ENCODE measurements at regions of chr12 and their contacts with region 1.

Region 1: GRCh38 chr12:104671407-104672098 is 214.8 kb downstream of the CHST11 start:
- DNase-seq: peak; percentile 94
- H3K4me3 Mint-ChIP-seq: peak overlapping the region; percentile 52
- H3K27ac Mint-ChIP-seq: peak overlapping the region; percentile 95
- H3K4me1 Mint-ChIP-seq: peaks cover 60% of the 10 kb centered on the region
- H3K27me3 Mint-ChIP-seq: no peaks in the 10 kb centered on the region

Region 2: GRCh38 chr12:104462931-104463339 is 208.6 kb before region 1 on chr12:
- CTCF ChIA-PET with region 1: interaction called, 3 read pairs
- POLR2A ChIA-PET with region 1: no interaction called
- intact Hi-C with region 1: loop called (anchors 1 kb)
- DNase-seq: peak; percentile 65
- H3K4me3 Mint-ChIP-seq: peak overlapping the region; percentile 67
- H3K27ac Mint-ChIP-seq: peak overlapping the region; percentile 98
- H3K4me1 Mint-ChIP-seq: peaks cover 76% of the 10 kb centered on the region
- H3K27me3 Mint-ChIP-seq: no peaks in the 10 kb centered on the region

Region 3: DNA sequence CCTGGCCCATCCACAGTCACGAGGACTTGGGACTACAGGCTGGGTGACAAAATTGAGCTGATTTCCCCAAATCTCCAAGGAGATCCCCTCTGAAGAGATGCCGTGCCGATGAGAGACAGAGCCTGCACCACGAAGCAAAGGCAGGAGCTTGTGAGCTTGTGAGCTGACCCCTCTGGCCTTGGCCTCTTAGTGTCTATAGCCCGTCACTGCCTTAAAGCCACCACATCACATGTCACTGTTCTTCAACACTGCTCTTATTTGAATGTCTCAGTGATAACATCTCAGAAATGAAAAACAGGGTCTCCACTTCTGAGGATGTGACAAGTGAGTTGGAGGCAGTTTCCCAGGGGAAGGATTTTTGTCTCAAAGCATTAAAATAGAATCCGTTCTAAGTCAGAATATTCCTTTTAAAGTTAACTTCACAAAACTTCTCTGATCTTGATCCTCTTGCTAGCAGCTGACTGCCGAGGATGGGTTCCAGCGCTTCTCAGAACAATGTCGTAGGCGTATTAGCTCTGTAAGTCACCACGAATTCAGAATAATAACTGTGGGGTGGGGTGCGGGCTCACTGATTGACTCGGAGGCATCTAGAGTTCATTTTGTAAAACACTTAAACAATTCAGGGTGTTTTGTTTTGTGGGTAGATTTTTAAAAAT is 177.3 kb before region 1 on chr12:
- CTCF ChIA-PET with region 1: interaction called, 3 read pairs
- POLR2A ChIA-PET with region 1: no interaction called
- intact Hi-C with region 1: loop called (anchors 2 kb)
- DNase-seq: peak; percentile 89
- H3K4me3 Mint-ChIP-seq: peak overlapping the region; percentile 62
- H3K27ac Mint-ChIP-seq: peak overlapping the region; percentile 89
- H3K4me1 Mint-ChIP-seq: peaks cover 88% of the 10 kb centered on the region
- H3K27me3 Mint-ChIP-seq: no peaks in the 10 kb centered on the region

Region 4: GRCh38 chr12:104505095-104505818 is 166.3 kb before region 1 on chr12:
- CTCF ChIA-PET with region 1: no interaction called
- POLR2A ChIA-PET with region 1: no interaction called
- intact Hi-C with region 1: no loop called
- DNase-seq: no peak
- H3K4me3 Mint-ChIP-seq: no peak overlapping the region
- H3K27ac Mint-ChIP-seq: no peak overlapping the region
- H3K4me1 Mint-ChIP-seq: peaks cover 92% of the 10 kb centered on the region
- H3K27me3 Mint-ChIP-seq: no peaks in the 10 kb centered on the region

Region 5: GRCh38 chr12:104604070-104604994 is 67.2 kb before region 1 on chr12:
- CTCF ChIA-PET with region 1: interaction called, 3 read pairs
- POLR2A ChIA-PET with region 1: no interaction called
- intact Hi-C with region 1: loop called (anchors 1 kb)
- DNase-seq: peak; percentile 81
- H3K4me3 Mint-ChIP-seq: peak overlapping the region; percentile 19
- H3K27ac Mint-ChIP-seq: peak overlapping the region; percentile 92
- H3K4me1 Mint-ChIP-seq: peaks cover 47% of the 10 kb centered on the region
- H3K27me3 Mint-ChIP-seq: no peaks in the 10 kb centered on the region

Region 6: GRCh38 chr12:104763168-104763805 is 91.7 kb after region 1 on chr12:
- CTCF ChIA-PET with region 1: no interaction called
- POLR2A ChIA-PET with region 1: no interaction called
- intact Hi-C with region 1: loop called (anchors 1 kb)
- DNase-seq: peak; percentile 49
- H3K4me3 Mint-ChIP-seq: no peak overlapping the region
- H3K27ac Mint-ChIP-seq: peak overlapping the region; percentile 44
- H3K4me1 Mint-ChIP-seq: peaks cover 23% of the 10 kb centered on the region
- H3K27me3 Mint-ChIP-seq: no peaks in the 10 kb centered on the region